Transverse colon (tissue), 4 donors: ENCODE measurements at regions of chr2 and their contacts with region 1.

Region 1: GRCh38 chr2:103627301-103627700 is 865.5 kb downstream of the TMEM182 start:
- DNase-seq: no peak
- H3K4me3 ChIP-seq: no peak overlapping the region
- H3K27ac ChIP-seq: no peak overlapping the region
- H3K4me1 ChIP-seq: no peaks in the 10 kb centered on the region
- H3K27me3 ChIP-seq: no peaks in the 10 kb centered on the region
- CTCF ChIP-seq: no peak
- EP300 ChIP-seq: no peak
- POLR2A ChIP-seq: no peak

Region 2: DNA sequence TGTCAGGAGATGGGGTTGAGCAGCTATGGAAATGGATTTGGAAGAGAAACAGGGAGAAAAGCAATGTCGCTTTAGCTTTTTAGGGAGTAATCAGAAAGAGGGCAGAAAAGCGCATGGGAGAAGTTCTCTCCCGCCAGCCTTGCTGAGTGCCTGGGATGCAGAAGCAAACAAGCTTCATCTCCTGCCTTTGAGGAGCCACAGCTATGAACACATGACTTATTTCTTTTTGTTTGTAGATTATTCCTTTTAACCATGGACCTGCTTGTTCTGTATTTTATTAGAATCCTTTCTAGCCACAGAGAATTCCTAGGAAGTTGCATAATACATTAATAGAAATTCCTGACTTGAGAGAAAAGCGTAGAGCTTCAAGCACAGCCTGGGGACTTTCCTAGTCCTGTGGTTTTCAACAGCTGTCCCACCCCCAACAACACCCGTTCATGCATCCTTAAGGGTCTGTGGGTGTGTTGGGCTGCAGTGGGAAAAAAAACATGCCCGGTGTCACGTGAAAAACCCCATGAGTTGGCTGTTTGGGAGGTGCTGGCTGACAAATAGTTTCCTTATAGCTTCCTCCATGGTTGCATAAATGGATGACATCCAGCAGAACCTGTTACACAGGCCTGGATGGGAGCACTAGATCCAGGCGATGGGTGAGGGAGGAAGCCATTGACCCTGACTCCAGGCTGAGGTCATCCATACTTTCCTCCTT is 1139.4 kb before region 1 on chr2:
- in situ Hi-C with region 1: no loop called
- intact Hi-C with region 1: loop called (anchors 5 kb)
- DNase-seq: peak; percentile 62
- H3K4me3 ChIP-seq: no peak overlapping the region
- H3K27ac ChIP-seq: no peak overlapping the region
- H3K4me1 ChIP-seq: peaks cover 0 to 7% (median 0%) of the 10 kb centered on the region in 4 donors
- H3K27me3 ChIP-seq: no peaks in the 10 kb centered on the region
- CTCF ChIP-seq: no peak
- EP300 ChIP-seq: no peak
- POLR2A ChIP-seq: no peak